Activated CD8-positive, alpha-beta T cell treated with anti-CD3 and anti-CD28 coated beads for 36 hours (primary cell): ENCODE measurements at regions of chr9 and their contacts with region 1.

Region 1: DNA sequence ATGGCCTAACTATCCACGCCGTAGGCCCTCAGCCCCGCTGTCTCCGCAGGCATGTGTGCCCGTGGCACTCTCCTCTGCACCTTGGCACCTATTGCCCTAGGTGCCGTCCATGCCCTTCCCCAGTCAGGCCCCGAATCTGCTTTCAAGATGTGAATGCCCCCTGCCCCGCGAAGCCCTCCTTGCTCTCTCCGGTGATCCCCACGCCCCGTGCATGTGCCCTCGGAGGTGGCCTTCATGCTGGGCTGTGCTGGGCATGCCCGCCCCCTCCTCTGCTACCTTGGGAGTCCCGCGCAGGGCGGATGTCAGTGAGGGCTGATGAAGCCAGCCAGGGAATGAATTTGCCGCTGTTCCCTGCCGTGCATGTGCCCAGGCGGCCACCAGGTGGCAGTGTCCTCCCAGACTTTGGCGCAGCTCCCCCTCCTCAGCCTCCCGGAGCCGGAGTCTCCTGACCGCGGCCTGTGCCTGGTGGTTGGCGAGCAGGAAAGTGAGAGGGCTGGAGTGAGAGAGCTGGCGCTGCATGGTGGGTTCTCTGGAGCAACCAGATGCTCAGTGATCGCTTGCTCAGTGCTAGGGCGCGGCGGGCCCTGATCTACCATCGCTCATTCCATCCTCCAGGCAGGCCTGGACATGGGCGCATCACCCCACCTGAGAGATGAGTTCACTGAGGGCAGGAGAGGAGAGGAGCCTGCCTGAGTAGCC is 112.9 kb upstream of the LMX1B start:
- DNase-seq: peak; percentile 70
- ATAC-seq: peak; percentile 76
- H3K4me3 Mint-ChIP-seq: no peak overlapping the region
- H3K27ac Mint-ChIP-seq: no peak overlapping the region
- H3K4me1 Mint-ChIP-seq: peaks cover 11% of the 10 kb centered on the region
- H3K27me3 Mint-ChIP-seq: peaks cover 10% of the 10 kb centered on the region
- CTCF ChIP-seq: peak; percentile 96

Region 2: DNA sequence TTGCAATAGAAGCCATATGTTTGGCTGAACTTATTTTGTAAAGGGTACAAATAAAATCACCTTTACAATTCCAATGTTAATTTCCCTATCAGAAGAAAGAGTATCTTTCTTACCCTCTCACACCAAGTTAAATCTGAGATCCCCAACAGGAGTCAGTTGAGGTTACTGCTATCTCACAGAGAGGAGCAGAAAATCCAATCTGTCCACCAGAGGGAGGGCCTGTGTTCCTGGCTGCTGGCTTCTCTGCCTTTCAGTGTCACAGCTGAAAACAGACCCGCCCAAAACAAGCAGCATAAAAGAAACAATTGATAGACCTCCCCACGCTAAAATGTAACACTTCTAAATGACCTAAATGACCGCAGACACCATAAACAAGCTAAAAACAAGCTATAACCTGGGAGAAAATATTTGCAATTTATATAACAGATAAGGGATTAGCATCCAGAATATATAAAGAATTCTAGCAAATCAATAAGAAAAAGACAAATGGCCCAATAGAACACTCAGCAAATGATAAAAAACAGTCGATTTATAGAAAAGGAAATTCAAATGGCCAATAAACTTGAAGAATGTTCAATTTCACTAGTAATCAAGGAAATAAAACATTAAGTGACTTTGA is 198.7 kb before region 1 on chr9:
- CTCF ChIA-PET with region 1: interaction called, 3 read pairs
- POLR2A ChIA-PET with region 1: no interaction called
- intact Hi-C with region 1: loop called (anchors 5 kb)
- DNase-seq: peak; percentile 71
- ATAC-seq: peak; percentile 67
- H3K4me3 Mint-ChIP-seq: no peak overlapping the region
- H3K27ac Mint-ChIP-seq: no peak overlapping the region
- H3K4me1 Mint-ChIP-seq: peaks cover 1% of the 10 kb centered on the region
- H3K27me3 Mint-ChIP-seq: peaks cover 1% of the 10 kb centered on the region
- CTCF ChIP-seq: peak; percentile 52

Region 3: GRCh38 chr9:126375386-126375785 is 125.4 kb before region 1 on chr9:
- CTCF ChIA-PET with region 1: no interaction called
- POLR2A ChIA-PET with region 1: no interaction called
- intact Hi-C with region 1: no loop called
- DNase-seq: no peak
- ATAC-seq: peak; percentile 42
- H3K4me3 Mint-ChIP-seq: no peak overlapping the region
- H3K27ac Mint-ChIP-seq: no peak overlapping the region
- H3K4me1 Mint-ChIP-seq: peaks cover 29% of the 10 kb centered on the region
- H3K27me3 Mint-ChIP-seq: no peaks in the 10 kb centered on the region
- CTCF ChIP-seq: no peak

Region 4: DNA sequence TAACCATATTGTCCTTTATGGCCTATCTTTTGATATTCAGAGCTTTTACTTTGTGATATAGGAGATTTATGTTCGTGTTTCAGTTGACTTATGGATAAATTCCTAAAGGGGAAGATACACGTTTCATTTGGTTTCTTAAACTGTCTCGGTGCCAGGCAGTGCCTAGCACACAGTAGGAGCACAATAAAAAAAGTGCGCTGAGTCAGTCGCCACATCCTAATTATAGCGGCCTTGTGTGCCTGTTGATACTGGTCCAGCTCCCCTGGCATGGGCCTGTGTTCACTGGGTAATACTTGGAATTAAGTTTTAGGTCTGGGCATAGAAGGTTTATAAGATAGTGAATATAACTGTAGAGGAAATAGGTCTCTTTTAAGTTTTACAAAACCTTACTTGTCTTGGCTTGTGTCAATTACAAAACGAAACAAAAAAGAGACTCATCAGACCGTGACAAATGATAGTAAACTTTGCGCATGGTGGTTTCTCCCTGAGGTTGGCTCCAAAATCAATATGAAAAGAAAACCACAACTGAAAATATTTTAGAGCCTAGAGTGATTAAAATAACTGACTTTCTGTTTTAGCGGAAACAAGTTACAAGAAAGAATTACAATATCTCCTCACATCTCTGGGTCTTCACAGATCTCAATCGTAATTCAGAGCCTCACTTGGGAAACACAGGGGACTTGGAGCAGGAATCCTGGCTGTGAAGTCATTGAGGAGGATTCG is 89.4 kb before region 1 on chr9:
- CTCF ChIA-PET with region 1: no interaction called
- POLR2A ChIA-PET with region 1: no interaction called
- intact Hi-C with region 1: no loop called
- DNase-seq: peak; percentile 70
- ATAC-seq: peak; percentile 90
- H3K4me3 Mint-ChIP-seq: peak overlapping the region; percentile 61
- H3K27ac Mint-ChIP-seq: peak overlapping the region; percentile 86
- H3K4me1 Mint-ChIP-seq: peaks cover 41% of the 10 kb centered on the region
- H3K27me3 Mint-ChIP-seq: no peaks in the 10 kb centered on the region
- CTCF ChIP-seq: no peak

Region 5: GRCh38 chr9:126514047-126514821 is 13.4 kb after region 1 on chr9:
- CTCF ChIA-PET with region 1: interaction called, 61 read pairs
- POLR2A ChIA-PET with region 1: interaction called, 3 read pairs
- intact Hi-C with region 1: no loop called
- DNase-seq: peak; percentile 70
- ATAC-seq: peak; percentile 75
- H3K4me3 Mint-ChIP-seq: no peak overlapping the region
- H3K27ac Mint-ChIP-seq: no peak overlapping the region
- H3K4me1 Mint-ChIP-seq: peaks cover 28% of the 10 kb centered on the region
- H3K27me3 Mint-ChIP-seq: peaks cover 52% of the 10 kb centered on the region
- CTCF ChIP-seq: peak; percentile 64

Region 6: GRCh38 chr9:126538550-126538949 is 37.7 kb after region 1 on chr9:
- CTCF ChIA-PET with region 1: interaction called, 21 read pairs
- POLR2A ChIA-PET with region 1: no interaction called
- intact Hi-C with region 1: no loop called
- DNase-seq: no peak
- ATAC-seq: no peak
- H3K4me3 Mint-ChIP-seq: no peak overlapping the region
- H3K27ac Mint-ChIP-seq: no peak overlapping the region
- H3K4me1 Mint-ChIP-seq: no peaks in the 10 kb centered on the region
- H3K27me3 Mint-ChIP-seq: peaks cover 2% of the 10 kb centered on the region
- CTCF ChIP-seq: no peak

Region 7: DNA sequence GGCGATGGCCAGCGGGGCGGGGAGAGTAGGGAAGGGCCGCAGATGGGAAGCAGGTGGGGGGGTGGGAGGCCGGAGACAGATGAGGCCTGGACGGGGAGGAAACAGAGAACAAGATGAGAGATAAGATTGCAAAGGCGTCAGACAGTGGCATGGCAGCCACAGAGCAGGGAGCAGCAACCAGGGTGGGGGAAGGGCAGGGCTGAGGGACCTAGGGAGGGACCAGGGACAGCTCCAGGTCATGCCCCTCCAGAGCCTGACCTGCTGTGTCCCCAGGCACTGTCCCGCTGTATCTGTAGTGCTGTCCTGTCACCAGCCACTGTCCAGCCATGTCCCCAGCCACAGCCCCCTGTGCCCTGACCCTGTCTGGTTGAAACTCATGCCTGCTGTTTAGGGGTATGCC is 63.3 kb after region 1 on chr9:
- CTCF ChIA-PET with region 1: interaction called, 61 read pairs
- POLR2A ChIA-PET with region 1: no interaction called
- intact Hi-C with region 1: loop called (anchors 2 kb)
- DNase-seq: no peak
- ATAC-seq: no peak
- H3K4me3 Mint-ChIP-seq: no peak overlapping the region
- H3K27ac Mint-ChIP-seq: no peak overlapping the region
- H3K4me1 Mint-ChIP-seq: no peaks in the 10 kb centered on the region
- H3K27me3 Mint-ChIP-seq: peaks cover 38% of the 10 kb centered on the region
- CTCF ChIP-seq: no peak